ENCODE measurements at regions of chr18 and their contacts with region 1.

Region 1: DNA sequence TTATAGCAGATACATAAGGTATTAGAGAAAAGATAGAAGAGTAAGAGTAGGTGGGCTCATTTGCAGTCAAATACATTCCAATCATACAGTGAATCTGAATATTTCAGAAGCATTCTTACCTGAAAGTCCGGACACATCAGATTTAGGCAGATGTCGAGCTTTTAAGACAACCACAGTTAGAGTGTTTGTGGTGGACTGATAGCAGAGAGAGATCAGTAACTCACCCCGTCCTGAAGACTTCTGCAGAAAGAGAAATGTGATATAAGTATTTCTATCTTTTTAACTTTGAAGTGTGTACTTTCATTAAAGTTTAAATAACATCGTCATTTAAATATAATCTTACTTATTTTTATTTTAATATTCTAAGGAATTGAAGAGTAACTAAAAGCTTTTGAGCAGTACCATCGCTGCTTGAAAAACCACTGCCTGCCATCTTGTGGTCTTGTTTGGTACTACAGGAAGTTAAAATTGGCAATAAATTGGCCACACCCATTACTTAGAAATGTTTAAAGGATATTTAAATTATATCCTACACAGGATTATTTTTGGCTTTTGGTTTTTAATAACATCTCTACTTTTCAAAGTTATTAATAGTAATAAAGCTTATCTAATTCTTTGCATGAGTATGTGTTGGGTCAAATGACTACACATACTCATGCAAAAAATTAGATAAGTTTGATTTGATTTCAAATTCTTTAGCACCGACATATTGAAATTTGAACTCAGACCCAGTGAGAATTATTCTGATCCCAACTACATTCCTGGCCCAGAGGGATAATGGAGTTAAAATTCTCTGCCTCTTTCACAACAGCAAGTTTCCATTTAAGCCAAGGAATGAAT is 5.5 kb downstream of the SYT4 start:
- DNase-seq: no peak
- H3K4me3 ChIP-seq: no peak overlapping the region
- H3K27ac ChIP-seq: no peak overlapping the region
- H3K4me1 ChIP-seq: no peaks in the 10 kb centered on the region
- H3K27me3 ChIP-seq: no peaks in the 10 kb centered on the region
- CTCF ChIP-seq: peak; percentile 46 to 92 (median 76)
- POLR2A ChIP-seq: no peak

Region 2: GRCh38 chr18:42114310-42114943 is 1157.4 kb before region 1 on chr18:
- intact Hi-C with region 1: loop called (anchors 5 kb)
- DNase-seq: peak; percentile 56
- H3K4me3 ChIP-seq: no peak overlapping the region
- H3K27ac ChIP-seq: no peak overlapping the region
- H3K4me1 ChIP-seq: no peaks in the 10 kb centered on the region
- H3K27me3 ChIP-seq: no peaks in the 10 kb centered on the region
- CTCF ChIP-seq: peak; percentile 64 to 84 (median 75)
- POLR2A ChIP-seq: no peak

Region 3: GRCh38 chr18:42298759-42299675 is 972.8 kb before region 1 on chr18:
- intact Hi-C with region 1: loop called (anchors 2 kb)
- DNase-seq: peak; percentile 70
- H3K4me3 ChIP-seq: no peak overlapping the region
- H3K27ac ChIP-seq: no peak overlapping the region
- H3K4me1 ChIP-seq: no peaks in the 10 kb centered on the region
- H3K27me3 ChIP-seq: no peaks in the 10 kb centered on the region
- CTCF ChIP-seq: peak; percentile 66 to 86 (median 82)
- POLR2A ChIP-seq: no peak

Region 4: DNA sequence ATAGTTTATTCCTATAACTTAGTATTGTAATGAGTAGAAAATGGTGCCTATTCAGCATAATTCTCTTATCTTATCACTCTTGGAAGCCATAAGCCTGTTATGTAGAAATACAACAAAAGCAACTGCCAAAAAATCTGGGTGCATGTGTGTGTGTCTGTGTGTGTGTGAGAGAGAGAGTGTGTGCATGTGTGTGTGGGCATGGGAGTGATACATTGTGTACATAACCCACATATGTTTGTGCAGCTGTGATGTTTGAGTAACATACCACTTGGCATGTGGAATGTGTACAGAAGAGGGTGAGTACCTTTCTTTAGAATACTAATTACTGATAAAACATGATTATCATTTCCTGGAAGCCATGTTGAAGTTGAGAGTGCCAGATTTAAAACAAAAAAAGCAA is 647.7 kb after region 1 on chr18:
- intact Hi-C with region 1: no loop called
- DNase-seq: no peak
- H3K4me3 ChIP-seq: no peak overlapping the region
- H3K27ac ChIP-seq: no peak overlapping the region
- H3K4me1 ChIP-seq: no peaks in the 10 kb centered on the region
- H3K27me3 ChIP-seq: no peaks in the 10 kb centered on the region
- CTCF ChIP-seq: no peak
- POLR2A ChIP-seq: no peak

Measured in prostate gland (tissue), 2 donors.